ENCODE measurements at regions of chr4 and their contacts with region 1.

Region 1: GRCh38 chr4:25051534-25051933 is 20.8 kb upstream of the LGI2 start:
- DNase-seq: no peak
- H3K4me3 ChIP-seq: no peak overlapping the region
- H3K27ac ChIP-seq: no peak overlapping the region
- H3K4me1 ChIP-seq: no peaks in the 10 kb centered on the region
- H3K27me3 ChIP-seq: no peaks in the 10 kb centered on the region
- CTCF ChIP-seq: no peak
- EP300 ChIP-seq: no peak
- POLR2A ChIP-seq: no peak
- RAD21 ChIP-seq: no peak

Region 2: DNA sequence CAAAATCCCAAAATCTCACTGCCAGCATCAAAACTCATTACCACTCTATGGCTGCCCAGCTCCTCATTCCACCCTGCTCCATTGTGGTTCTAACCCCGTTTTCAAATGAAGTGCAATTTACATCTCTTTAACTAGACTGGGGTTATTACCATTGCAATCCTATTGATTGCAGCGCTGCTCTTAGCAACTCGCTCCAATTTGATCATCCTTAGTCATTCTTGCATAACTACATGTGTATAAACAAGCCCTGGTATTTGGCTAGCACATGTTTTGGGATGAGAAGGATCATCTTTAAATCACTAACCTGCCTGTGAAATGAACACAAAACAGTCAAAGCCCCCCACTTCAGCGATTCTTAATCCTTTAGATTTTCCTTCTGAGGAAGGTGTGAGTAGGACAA is 821.6 kb before region 1 on chr4:
- CTCF ChIA-PET with region 1: no interaction called
- POLR2A ChIA-PET with region 1: no interaction called
- DNase-seq: no peak
- H3K4me3 ChIP-seq: no peak overlapping the region
- H3K27ac ChIP-seq: no peak overlapping the region
- H3K4me1 ChIP-seq: peaks cover 0 to 7% (median 1%) of the 10 kb centered on the region in 4 experiments; a peak in 1 of 7 replicates
- H3K27me3 ChIP-seq: no peaks in the 10 kb centered on the region
- CTCF ChIP-seq: no peak
- EP300 ChIP-seq: no peak
- POLR2A ChIP-seq: no peak
- RAD21 ChIP-seq: no peak

Region 3: DNA sequence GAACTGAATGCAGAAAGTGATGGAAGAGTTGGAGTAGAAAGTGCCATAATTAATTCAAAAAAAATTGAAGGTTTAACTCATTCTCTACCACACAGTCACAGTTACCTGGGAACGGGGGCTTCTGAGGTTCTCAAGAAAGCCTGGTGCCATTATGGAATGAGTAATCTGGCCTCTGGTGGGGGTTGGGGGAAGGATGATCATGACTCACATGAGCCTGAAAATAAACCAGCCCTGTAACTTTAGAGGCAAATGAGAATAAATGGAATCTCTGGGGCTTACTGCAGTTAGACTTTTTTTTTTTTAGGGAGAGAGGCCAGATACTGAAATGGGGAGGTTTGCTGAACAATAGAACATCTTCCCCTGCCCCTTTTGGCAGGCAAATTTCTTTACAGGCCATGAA is 200.9 kb before region 1 on chr4:
- CTCF ChIA-PET with region 1: no interaction called
- POLR2A ChIA-PET with region 1: no interaction called
- DNase-seq: no peak
- H3K4me3 ChIP-seq: no peak overlapping the region
- H3K27ac ChIP-seq: no peak overlapping the region
- H3K4me1 ChIP-seq: peaks cover 0 to 5% (median under 1%) of the 10 kb centered on the region in 4 experiments; a peak in 1 of 7 replicates
- H3K27me3 ChIP-seq: no peaks in the 10 kb centered on the region
- CTCF ChIP-seq: no peak
- EP300 ChIP-seq: no peak
- POLR2A ChIP-seq: no peak
- RAD21 ChIP-seq: no peak

Region 4: GRCh38 chr4:25065475-25065874 is 13.9 kb after region 1 on chr4:
- CTCF ChIA-PET with region 1: interaction called, 24 read pairs
- POLR2A ChIA-PET with region 1: no interaction called
- DNase-seq: no peak
- H3K4me3 ChIP-seq: no peak overlapping the region
- H3K27ac ChIP-seq: no peak overlapping the region
- H3K4me1 ChIP-seq: peaks cover 0 to 18% (median 12%) of the 10 kb centered on the region in 4 experiments
- H3K27me3 ChIP-seq: no peaks in the 10 kb centered on the region
- CTCF ChIP-seq: no peak
- EP300 ChIP-seq: no peak
- POLR2A ChIP-seq: no peak
- RAD21 ChIP-seq: no peak

Region 5: DNA sequence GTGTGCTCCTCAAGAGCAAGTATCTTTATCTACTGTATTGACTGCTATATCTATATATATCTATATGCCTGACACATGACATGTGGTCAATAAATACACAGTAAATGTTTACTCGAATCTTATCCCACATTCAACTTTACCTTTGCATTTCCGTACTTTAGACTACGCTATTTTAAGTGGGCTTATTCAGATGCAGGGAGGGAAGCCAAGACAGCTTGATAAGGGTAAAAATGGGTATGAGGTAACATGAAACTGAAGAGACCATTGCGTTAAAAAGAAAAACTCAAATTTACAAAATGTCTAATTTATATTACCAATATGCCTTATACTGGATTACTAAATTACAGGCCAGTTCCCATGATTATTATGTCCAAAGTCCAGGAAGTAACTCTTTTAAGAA is 90.9 kb after region 1 on chr4:
- CTCF ChIA-PET with region 1: no interaction called
- POLR2A ChIA-PET with region 1: no interaction called
- DNase-seq: no peak
- H3K4me3 ChIP-seq: no peak overlapping the region
- H3K27ac ChIP-seq: no peak overlapping the region
- H3K4me1 ChIP-seq: no peaks in the 10 kb centered on the region
- H3K27me3 ChIP-seq: no peaks in the 10 kb centered on the region
- CTCF ChIP-seq: no peak
- EP300 ChIP-seq: no peak
- POLR2A ChIP-seq: no peak
- RAD21 ChIP-seq: no peak

Region 6: DNA sequence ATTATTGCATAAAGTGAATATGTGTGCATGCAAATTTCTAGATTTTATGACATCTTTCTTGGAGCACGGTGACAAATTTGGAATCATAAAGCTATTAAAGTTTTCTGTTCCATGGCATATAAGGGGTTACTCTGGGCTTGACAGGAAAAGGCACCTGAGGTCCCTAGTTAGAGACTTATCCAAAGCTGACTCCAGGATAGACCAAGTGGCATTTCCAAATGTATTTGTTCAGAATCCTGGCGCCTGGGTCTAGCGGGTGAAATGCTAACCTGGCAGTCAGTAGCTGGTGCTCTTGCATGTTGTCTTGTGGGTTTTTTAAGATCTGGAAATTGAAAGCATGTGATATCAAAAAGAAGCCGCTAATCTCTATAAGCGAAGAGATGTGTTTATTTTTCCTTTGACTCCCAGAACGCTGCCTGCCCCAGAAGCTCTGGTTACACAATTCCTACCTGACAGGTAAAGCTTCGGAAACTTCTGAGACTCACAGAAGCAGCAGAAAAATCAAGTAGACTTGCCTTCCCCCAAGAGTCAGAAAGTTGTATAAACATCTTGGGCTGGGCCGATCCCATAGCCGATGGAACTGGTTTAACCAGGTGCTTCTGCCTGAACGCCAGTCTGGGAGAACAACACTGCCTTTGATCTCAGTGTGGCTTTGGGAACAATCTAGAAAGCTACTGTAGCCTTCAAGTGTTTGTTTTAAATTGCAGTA is 248.1 kb after region 1 on chr4:
- CTCF ChIA-PET with region 1: no interaction called
- POLR2A ChIA-PET with region 1: no interaction called
- DNase-seq: no peak
- H3K4me3 ChIP-seq: no peak overlapping the region
- H3K27ac ChIP-seq: no peak overlapping the region
- H3K4me1 ChIP-seq: no peaks in the 10 kb centered on the region
- H3K27me3 ChIP-seq: no peaks in the 10 kb centered on the region
- CTCF ChIP-seq: no peak
- EP300 ChIP-seq: no peak
- POLR2A ChIP-seq: no peak
- RAD21 ChIP-seq: peak in 1 of 2 experiments; percentile 39; a peak in 2 of 4 replicates